AG04450 (cell line): ENCODE measurements at regions of chr9 and their contacts with region 1.

Region 1: DNA sequence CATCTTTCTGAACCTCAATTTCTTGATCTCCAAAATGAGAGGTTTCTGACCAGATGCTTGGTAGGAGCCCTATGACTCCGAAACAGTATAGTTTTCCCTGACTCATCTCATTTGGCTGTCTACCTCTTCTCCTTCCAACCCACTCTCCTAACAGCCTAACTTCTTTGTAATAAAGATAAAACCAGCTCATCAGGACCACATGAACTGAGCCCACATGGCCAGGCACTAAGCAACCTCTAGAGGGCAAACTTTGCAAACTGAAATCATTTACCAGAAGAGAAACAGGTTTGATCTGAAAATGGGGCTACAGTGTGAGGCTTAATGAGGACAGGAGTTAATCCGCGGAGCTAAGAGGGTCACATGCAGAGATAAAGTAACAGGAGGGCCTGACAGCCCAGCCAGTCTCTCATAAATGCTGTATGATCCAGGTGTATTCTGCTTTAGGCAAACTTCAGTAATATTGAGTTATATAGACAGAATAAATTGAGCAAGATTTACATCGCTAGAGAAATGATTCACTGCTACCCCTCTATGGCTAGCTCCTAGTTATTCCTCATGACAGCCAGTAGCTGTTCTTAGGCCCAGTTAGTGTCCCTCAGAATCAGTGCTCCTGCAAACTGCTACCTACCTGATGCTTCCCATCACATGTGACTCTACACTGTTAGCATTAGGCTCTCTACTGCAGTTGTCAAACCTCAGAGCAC is 64.6 kb downstream of the ABCA1 start:
- DNase-seq: peak; percentile 78
- H3K4me3 ChIP-seq: no peak overlapping the region
- H3K27ac ChIP-seq: peak overlapping the region; percentile 69
- H3K27me3 ChIP-seq: no peaks in the 10 kb centered on the region
- CTCF ChIP-seq: peak; percentile 89

Region 2: DNA sequence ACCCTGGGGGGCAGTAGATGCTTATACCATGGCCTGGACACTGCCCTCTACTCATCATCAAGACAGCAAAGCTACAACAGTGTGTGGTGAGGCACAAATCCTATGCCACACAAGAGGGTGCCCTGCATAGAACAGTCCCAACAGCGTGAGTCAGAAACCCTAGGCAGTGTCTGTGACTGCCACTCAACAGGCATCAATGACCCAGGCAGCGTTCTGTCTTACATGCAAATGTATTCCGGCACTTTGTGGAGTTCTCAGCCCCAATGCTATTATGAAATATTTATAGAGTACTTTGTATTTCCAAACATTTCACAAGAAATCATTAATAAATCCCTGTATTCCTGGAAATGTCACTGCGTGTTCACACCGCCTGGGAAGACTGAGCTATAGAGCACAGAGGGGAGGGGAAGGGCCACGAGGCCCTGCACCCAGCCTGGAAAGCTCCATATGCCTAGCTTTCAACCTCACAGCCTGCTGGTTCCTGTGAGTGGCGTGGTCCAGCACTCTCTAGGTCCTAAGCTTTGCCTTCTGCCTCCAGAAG is 21.7 kb before region 1 on chr9:
- CTCF ChIA-PET with region 1: interaction called, 10 read pairs
- POLR2A ChIA-PET with region 1: no interaction called
- DNase-seq: no peak
- H3K4me3 ChIP-seq: no peak overlapping the region
- H3K27ac ChIP-seq: no peak overlapping the region
- H3K27me3 ChIP-seq: no peaks in the 10 kb centered on the region
- CTCF ChIP-seq: no peak

Region 3: GRCh38 chr9:104849023-104849422 is 14.3 kb before region 1 on chr9:
- CTCF ChIA-PET with region 1: interaction called, 15 read pairs
- POLR2A ChIA-PET with region 1: interaction called, 3 read pairs
- DNase-seq: no peak
- H3K4me3 ChIP-seq: no peak overlapping the region
- H3K27ac ChIP-seq: no peak overlapping the region
- H3K27me3 ChIP-seq: no peaks in the 10 kb centered on the region
- CTCF ChIP-seq: no peak

Region 4: GRCh38 chr9:104895572-104895971 is 32.2 kb after region 1 on chr9:
- CTCF ChIA-PET with region 1: interaction called, 20 read pairs
- POLR2A ChIA-PET with region 1: no interaction called
- DNase-seq: no peak
- H3K4me3 ChIP-seq: no peak overlapping the region
- H3K27ac ChIP-seq: no peak overlapping the region
- H3K27me3 ChIP-seq: no peaks in the 10 kb centered on the region
- CTCF ChIP-seq: no peak

Region 5: DNA sequence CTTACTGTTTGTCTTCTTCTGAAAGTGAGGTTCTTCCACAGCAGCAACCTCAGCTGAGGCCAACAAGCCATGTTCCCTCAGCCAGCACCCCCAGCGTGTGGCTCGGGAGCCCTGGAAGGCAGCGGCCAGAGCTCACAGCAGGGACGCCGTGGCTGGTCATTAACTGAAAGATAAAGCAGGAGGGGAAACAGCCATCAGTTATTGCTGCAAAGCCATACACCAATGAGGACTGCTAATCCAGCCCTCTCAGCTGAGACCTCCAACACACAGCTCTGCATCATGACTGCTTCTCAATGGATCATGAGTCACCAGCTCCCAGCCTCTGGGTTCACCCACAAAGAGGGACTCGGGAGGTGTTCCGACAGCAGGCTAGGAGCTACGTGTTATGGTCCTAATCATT is 40.3 kb after region 1 on chr9:
- CTCF ChIA-PET with region 1: interaction called, 28 read pairs
- POLR2A ChIA-PET with region 1: no interaction called
- DNase-seq: no peak
- H3K4me3 ChIP-seq: no peak overlapping the region
- H3K27ac ChIP-seq: no peak overlapping the region
- H3K27me3 ChIP-seq: no peaks in the 10 kb centered on the region
- CTCF ChIP-seq: no peak

Region 6: DNA sequence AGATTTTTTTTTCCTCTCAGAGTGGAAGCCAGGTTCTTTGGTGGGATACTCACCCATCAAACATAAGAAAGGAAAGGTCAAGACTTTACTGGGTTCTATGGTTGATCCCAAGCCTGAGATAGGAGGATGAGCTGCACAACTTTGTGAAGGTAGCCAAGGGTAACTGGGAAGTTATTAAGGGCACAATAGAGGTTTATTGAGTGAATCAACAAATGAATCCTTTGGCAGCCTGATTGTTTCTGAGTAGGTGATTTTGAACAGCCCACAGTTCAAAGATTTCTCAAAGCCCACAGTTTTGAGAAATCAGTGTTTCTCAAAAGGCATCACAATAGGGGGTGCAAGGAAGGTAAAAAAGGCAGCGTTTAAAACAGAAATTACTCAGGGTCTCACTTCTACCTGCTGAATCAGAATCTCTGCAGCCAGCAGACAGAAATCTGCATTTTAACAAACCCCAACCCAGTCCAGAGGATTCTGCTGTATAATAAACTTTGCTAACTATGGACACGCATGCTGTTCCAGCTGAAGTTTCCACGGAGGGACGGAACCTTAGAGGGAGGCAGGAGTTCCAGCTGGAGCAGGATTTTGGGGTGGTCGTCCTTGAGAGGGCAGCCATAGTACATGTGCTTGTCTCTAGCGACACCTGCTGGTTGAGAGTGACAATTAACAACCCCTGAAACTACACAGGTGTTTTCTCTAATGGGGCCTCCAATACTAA is 551.8 kb after region 1 on chr9:
- CTCF ChIA-PET with region 1: interaction called, 31 read pairs
- POLR2A ChIA-PET with region 1: no interaction called
- DNase-seq: no peak
- H3K4me3 ChIP-seq: no peak overlapping the region
- H3K27ac ChIP-seq: no peak overlapping the region
- H3K27me3 ChIP-seq: no peaks in the 10 kb centered on the region
- CTCF ChIP-seq: peak; percentile 86